ENCODE measurements at regions of chr3 and their contacts with region 1.

Region 1: GRCh38 chr3:10983219-10983916 is 9.2 kb upstream of the SLC6A1 start:
- DNase-seq: peak in 1 of 2 donors; percentile 17
- ATAC-seq: peak; percentile 76 to 79
- H3K4me3 ChIP-seq: peak overlapping the region in 1 of 4 donors; percentile 9
- H3K27ac ChIP-seq: no peak overlapping the region
- H3K4me1 ChIP-seq: peaks cover 6 to 7% of the 10 kb centered on the region in 2 donors
- H3K27me3 ChIP-seq: no peaks in the 10 kb centered on the region
- CTCF ChIP-seq: peak; percentile 45 to 79 (median 71)
- POLR2A ChIP-seq: no peak

Region 2: GRCh38 chr3:10437272-10437994 is 545.9 kb before region 1 on chr3:
- in situ Hi-C with region 1: no loop called
- intact Hi-C with region 1: no loop called
- DNase-seq: no peak
- ATAC-seq: peak in 1 of 2 donors; percentile 20
- H3K4me3 ChIP-seq: no peak overlapping the region
- H3K27ac ChIP-seq: peak overlapping the region; percentile 85 to 97 (median 94)
- H3K4me1 ChIP-seq: peaks cover 40 to 46% of the 10 kb centered on the region in 2 donors
- H3K27me3 ChIP-seq: no peaks in the 10 kb centered on the region
- CTCF ChIP-seq: no peak
- POLR2A ChIP-seq: no peak

Region 3: DNA sequence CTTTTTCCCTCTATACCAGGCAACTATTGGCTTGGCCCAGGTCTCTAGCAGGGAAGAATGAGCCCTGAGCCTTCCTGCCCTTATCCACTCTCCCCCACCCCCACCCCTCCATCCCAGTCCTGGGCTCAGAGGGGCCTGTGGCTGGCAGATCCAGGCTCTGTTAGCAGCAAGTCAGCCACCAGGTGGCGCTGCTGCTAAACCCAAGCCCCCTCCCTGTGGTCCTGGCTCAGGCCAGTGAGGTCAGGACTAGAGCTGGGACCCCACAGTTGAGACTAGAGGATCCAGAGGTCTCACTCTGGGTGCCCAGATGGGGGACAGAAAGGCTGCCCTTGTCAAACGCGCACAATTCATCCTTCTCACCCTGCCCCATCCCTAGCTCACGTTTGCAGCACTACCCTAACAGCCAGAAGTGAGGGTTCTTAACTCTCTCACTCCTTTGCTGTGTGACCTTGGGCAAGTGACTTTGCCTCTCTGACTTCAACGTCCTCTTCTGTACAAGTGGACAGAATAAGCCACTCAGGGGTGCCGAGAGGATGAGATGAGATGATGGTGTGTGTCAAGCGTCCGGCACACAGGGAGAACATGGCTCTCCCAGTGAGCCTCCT is 37.6 kb before region 1 on chr3:
- in situ Hi-C with region 1: no loop called
- intact Hi-C with region 1: loop called (anchors 1 kb)
- DNase-seq: peak in 1 of 2 donors; percentile 22
- ATAC-seq: peak; percentile 42 to 78
- H3K4me3 ChIP-seq: no peak overlapping the region
- H3K27ac ChIP-seq: no peak overlapping the region
- H3K4me1 ChIP-seq: no peaks in the 10 kb centered on the region
- H3K27me3 ChIP-seq: peaks cover 0 to 10% (median 0%) of the 10 kb centered on the region in 3 donors
- CTCF ChIP-seq: peak; percentile 57 to 91 (median 89)
- POLR2A ChIP-seq: no peak

Region 4: GRCh38 chr3:11096266-11097135 is 113.1 kb after region 1 on chr3:
- in situ Hi-C with region 1: no loop called
- intact Hi-C with region 1: no loop called
- DNase-seq: peak in 1 of 2 donors; percentile 30
- ATAC-seq: peak; percentile 39 to 49
- H3K4me3 ChIP-seq: peak overlapping the region in 2 of 4 donors; percentile 10 to 26
- H3K27ac ChIP-seq: peak overlapping the region in 2 of 4 donors; percentile 35 to 47
- H3K4me1 ChIP-seq: peaks cover 0 to 4% of the 10 kb centered on the region in 2 donors
- H3K27me3 ChIP-seq: peaks cover 7 to 15% (median 11%) of the 10 kb centered on the region in 3 donors
- CTCF ChIP-seq: no peak
- POLR2A ChIP-seq: no peak

Measured in gastrocnemius medialis (tissue), 4 donors.